GM12878 (cell line): ENCODE measurements at regions of chr17 and their contacts with region 1.

Region 1: GRCh38 chr17:70597774-70598173 is 428.4 kb downstream of the KCNJ2 start:
- DNase-seq: no peak
- ATAC-seq: no peak
- H3K4me3 ChIP-seq: no peak overlapping the region
- H3K27ac ChIP-seq: no peak overlapping the region
- H3K4me1 ChIP-seq: no peaks in the 10 kb centered on the region
- H3K27me3 ChIP-seq: no peaks in the 10 kb centered on the region
- CTCF ChIP-seq: no peak
- EP300 ChIP-seq: no peak
- POLR2A ChIP-seq: no peak
- RAD21 ChIP-seq: no peak

Region 2: DNA sequence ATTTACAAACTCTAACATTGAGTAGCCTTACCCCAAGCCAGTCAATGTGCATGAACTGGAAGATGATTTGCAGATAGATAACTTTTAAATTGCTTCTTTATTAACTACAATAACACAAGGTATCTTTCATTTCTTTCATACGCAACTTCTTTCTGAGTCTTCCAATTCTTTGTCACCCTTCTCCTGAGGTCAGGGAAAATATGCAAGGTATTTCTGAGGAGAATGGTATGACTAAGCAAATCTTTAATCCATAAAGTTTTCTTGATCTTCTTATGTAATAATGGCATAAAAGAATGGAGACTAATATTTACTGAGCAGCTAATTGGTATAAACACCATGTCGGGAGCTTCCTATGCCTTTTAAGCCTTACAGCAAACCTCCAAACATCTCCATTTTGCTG is 10.4 kb after region 1 on chr17:
- CTCF ChIA-PET with region 1: no interaction called
- POLR2A ChIA-PET with region 1: no interaction called
- RAD21 ChIA-PET with region 1: no interaction called
- SMC1A ChIA-PET with region 1: no interaction called
- in situ Hi-C with region 1: no loop called
- intact Hi-C with region 1: no loop called
- DNase-seq: no peak
- ATAC-seq: no peak
- H3K4me3 ChIP-seq: no peak overlapping the region
- H3K27ac ChIP-seq: no peak overlapping the region
- H3K4me1 ChIP-seq: no peaks in the 10 kb centered on the region
- H3K27me3 ChIP-seq: no peaks in the 10 kb centered on the region
- CTCF ChIP-seq: no peak
- EP300 ChIP-seq: no peak
- POLR2A ChIP-seq: no peak
- RAD21 ChIP-seq: no peak

Region 3: DNA sequence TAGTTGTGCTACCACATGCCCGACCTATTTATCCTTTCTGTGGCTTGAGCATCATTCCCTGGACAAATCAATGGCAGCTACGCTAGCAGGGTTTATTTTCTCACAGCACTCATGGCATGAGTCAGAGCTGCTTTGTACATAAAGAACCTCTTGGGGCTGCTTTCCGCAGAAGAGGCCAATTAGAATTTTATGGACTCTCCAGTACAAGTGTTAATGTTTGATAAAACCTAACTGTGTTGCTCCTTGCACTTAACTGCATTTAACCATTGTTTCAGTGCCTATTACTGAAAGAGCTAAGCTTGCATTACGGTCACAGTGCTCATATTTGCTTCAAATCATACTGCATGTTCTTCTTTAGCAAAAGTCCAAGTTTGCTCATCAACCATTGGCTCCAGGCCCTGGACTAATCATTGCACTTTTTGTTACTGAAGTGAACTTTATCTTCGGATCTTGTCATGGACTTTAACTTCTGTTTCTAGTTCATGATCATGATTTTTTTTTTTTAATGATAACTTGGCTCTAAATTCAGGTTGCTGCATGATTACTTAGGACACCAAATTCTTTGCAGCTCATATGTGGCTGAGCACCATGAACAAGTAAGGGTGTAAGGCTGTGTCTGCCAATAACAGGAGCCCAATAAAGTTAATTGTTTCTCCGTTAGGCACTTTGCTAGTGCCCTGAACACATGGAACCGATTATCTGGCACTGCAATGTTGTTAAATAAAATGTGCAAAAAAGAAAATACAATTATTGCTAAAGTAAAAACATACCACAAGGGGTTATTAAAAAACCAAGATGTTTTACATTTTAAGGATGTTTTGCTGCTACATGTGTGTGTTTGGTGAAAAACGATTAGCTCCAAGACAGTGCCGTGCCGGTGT is 63.8 kb after region 1 on chr17:
- CTCF ChIA-PET with region 1: no interaction called
- POLR2A ChIA-PET with region 1: no interaction called
- RAD21 ChIA-PET with region 1: no interaction called
- SMC1A ChIA-PET with region 1: no interaction called
- in situ Hi-C with region 1: no loop called
- intact Hi-C with region 1: loop called (anchors 2 kb)
- DNase-seq: no peak
- ATAC-seq: no peak
- H3K4me3 ChIP-seq: no peak overlapping the region
- H3K27ac ChIP-seq: no peak overlapping the region
- H3K4me1 ChIP-seq: no peaks in the 10 kb centered on the region
- H3K27me3 ChIP-seq: no peaks in the 10 kb centered on the region
- CTCF ChIP-seq: no peak
- EP300 ChIP-seq: no peak
- POLR2A ChIP-seq: no peak
- RAD21 ChIP-seq: no peak